ENCODE measurements at regions of chr2 and their contacts with region 1.

Region 1: GRCh38 chr2:200525882-200526651 is at the start of gene SGO2:
- DNase-seq: peak; percentile 98
- ATAC-seq: peak; percentile 99
- H3K4me3 Mint-ChIP-seq: peak within 1 kb of the TSS; percentile 99
- H3K27ac Mint-ChIP-seq: peak within 1 kb of the TSS; percentile 88
- H3K4me1 Mint-ChIP-seq: peaks cover 21% of the 10 kb centered on the region
- H3K27me3 Mint-ChIP-seq: peaks cover 3% of the 10 kb centered on the region
- CTCF ChIP-seq: no peak
- total RNA-seq, gene SGO2: 50.2 to 58.4 TPM

Region 2: DNA sequence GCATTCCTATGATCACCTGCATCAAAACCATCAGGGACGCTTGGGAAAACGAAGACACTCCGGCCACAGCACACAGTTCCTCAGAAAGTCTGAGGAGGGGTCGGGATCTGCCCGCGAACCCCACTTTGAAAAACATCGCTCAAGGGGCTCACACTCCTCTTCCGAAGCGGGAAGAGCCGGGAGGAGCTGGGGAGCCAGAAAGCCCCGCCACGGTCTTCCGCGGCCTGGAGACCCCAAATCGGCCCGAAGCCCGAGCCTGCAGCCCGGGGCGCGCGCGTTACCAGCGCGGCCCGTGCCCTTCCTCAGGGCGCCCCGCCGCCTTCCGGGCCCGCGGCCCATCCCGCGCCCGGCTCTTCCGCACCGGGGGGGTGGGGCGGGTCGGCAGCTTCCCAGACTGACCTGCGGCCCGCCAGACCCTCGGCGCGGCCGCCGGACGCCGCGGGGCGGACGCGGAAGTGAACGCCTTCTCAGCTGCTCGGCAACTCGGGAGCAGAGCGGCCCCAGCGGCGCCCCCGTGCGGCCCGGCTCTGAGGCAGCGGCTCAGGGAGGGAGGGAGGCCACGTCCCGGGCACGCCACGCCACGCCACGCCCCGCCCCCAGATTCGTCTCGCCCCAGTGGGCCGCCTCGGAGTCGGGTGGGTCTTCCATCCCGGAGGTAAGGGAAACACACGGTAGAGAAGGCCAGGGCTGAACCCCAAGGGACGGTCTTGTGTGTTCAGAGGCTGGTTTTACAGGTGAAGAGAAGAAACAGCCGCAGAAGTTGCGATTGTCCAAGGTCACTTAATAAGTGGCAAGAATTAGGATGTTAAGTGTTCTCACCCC is 16.2 kb before region 1 on chr2 and contains the start of gene KCTD18:
- CTCF ChIA-PET with region 1: interaction called, 44 read pairs
- POLR2A ChIA-PET with region 1: interaction called, 3 read pairs
- intact Hi-C with region 1: no loop called
- DNase-seq: peak; percentile 90
- ATAC-seq: peak; percentile 98
- H3K4me3 Mint-ChIP-seq: peak within 1 kb of the TSS; percentile 91
- H3K27ac Mint-ChIP-seq: peak within 1 kb of the TSS; percentile 89
- H3K4me1 Mint-ChIP-seq: peaks cover 25% of the 10 kb centered on the region
- H3K27me3 Mint-ChIP-seq: no peaks in the 10 kb centered on the region
- CTCF ChIP-seq: peak; percentile 80
- total RNA-seq, gene KCTD18: 15.2 to 16.7 TPM